Activated CD4-positive, alpha-beta memory T cell treated with anti-CD3 and anti-CD28 coated beads for 36 hours (primary cell): ENCODE measurements at regions of chr13 and their contacts with region 1.

Region 1: GRCh38 chr13:32791545-32792172 is 205.4 kb downstream of the PDS5B start:
- DNase-seq: peak; percentile 59
- H3K4me3 Mint-ChIP-seq: no peak overlapping the region
- H3K27ac Mint-ChIP-seq: no peak overlapping the region
- H3K4me1 Mint-ChIP-seq: peaks cover 23% of the 10 kb centered on the region
- H3K27me3 Mint-ChIP-seq: no peaks in the 10 kb centered on the region

Region 2: DNA sequence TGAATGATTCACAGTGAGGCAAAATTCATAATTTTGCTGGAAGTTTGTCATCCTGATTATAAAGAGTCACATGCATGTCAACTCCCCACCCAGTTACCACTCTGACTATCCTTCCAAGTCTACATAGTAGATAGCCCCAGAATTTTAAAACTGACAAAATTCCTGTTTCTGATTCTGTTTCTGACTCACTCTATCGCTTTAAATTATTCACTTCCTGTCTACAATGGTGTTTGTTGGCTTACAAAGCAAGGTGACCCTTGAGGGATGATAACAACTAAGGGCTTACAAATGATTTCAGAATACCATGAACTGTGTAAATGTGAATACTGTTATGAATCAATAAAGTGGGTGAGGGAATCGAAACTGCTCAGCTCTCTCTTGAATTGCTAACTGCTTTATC is 125.8 kb after region 1 on chr13:
- CTCF ChIA-PET with region 1: no interaction called
- POLR2A ChIA-PET with region 1: no interaction called
- intact Hi-C with region 1: loop called (anchors 2 kb)
- DNase-seq: peak; percentile 13
- H3K4me3 Mint-ChIP-seq: no peak overlapping the region
- H3K27ac Mint-ChIP-seq: no peak overlapping the region
- H3K4me1 Mint-ChIP-seq: peaks cover 13% of the 10 kb centered on the region
- H3K27me3 Mint-ChIP-seq: peaks cover 8% of the 10 kb centered on the region